Activated CD8-positive, alpha-beta T cell treated with anti-CD3 and anti-CD28 coated beads for 36 hours (primary cell): ENCODE measurements at regions of chr13 and their contacts with region 1.

Region 1: GRCh38 chr13:26985285-26985878 is 186.2 kb downstream of the USP12 start:
- DNase-seq: peak; percentile 86
- ATAC-seq: peak; percentile 90
- H3K4me3 Mint-ChIP-seq: no peak overlapping the region
- H3K27ac Mint-ChIP-seq: no peak overlapping the region
- H3K4me1 Mint-ChIP-seq: no peaks in the 10 kb centered on the region
- H3K27me3 Mint-ChIP-seq: peaks cover 11% of the 10 kb centered on the region
- CTCF ChIP-seq: peak; percentile 76

Region 2: GRCh38 chr13:26971990-26972887 is 13.1 kb before region 1 on chr13:
- CTCF ChIA-PET with region 1: interaction called, 15 read pairs
- POLR2A ChIA-PET with region 1: no interaction called
- intact Hi-C with region 1: no loop called
- DNase-seq: peak; percentile 59
- ATAC-seq: peak; percentile 80
- H3K4me3 Mint-ChIP-seq: no peak overlapping the region
- H3K27ac Mint-ChIP-seq: peak overlapping the region; percentile 25
- H3K4me1 Mint-ChIP-seq: peaks cover 4% of the 10 kb centered on the region
- H3K27me3 Mint-ChIP-seq: no peaks in the 10 kb centered on the region
- CTCF ChIP-seq: no peak

Region 3: GRCh38 chr13:27270594-27271520 is 285.5 kb after region 1 on chr13 and contains the start of gene RASL11A:
- CTCF ChIA-PET with region 1: interaction called, 22 read pairs
- POLR2A ChIA-PET with region 1: no interaction called
- intact Hi-C with region 1: no loop called
- DNase-seq: peak; percentile 64
- ATAC-seq: peak; percentile 91
- H3K4me3 Mint-ChIP-seq: peak within 1 kb of the TSS; percentile 77
- H3K27ac Mint-ChIP-seq: no peak within 1 kb of the TSS
- H3K4me1 Mint-ChIP-seq: peaks cover 6% of the 10 kb centered on the region
- H3K27me3 Mint-ChIP-seq: no peaks in the 10 kb centered on the region
- CTCF ChIP-seq: peak; percentile 100
- total RNA-seq, gene RASL11A: 2.7 to 3.1 TPM

Region 4: DNA sequence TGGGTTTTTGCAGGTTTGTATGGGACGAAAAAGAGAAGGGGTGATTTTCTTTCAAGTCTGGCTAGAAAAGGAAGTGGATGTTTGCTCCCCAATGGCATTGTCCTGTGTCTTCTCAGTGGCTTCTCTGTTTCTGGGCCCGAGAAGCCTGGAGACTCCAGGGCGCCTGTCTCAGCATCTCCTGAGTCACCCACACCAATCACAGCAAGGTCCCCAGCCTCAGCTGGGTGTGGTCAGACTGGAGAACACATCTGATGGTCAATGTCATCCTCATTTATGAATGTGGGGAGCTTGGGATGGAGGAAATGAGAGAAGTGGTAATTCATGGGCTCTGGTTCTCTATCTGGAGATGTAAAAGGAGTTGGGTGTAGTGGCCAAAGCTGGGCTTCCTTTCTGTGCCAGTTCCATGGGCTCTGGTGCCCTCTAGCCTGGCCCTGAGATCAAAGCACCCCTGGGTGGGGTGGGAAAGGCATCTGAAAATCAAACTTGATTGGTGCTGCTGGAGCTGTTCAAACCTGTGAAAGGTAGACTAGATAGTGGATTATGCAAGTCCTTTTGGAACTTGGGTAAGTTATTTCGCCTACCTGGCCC is 298.6 kb after region 1 on chr13:
- CTCF ChIA-PET with region 1: interaction called, 19 read pairs
- POLR2A ChIA-PET with region 1: no interaction called
- intact Hi-C with region 1: no loop called
- DNase-seq: peak; percentile 45
- ATAC-seq: peak; percentile 69
- H3K4me3 Mint-ChIP-seq: no peak overlapping the region
- H3K27ac Mint-ChIP-seq: no peak overlapping the region
- H3K4me1 Mint-ChIP-seq: no peaks in the 10 kb centered on the region
- H3K27me3 Mint-ChIP-seq: no peaks in the 10 kb centered on the region
- CTCF ChIP-seq: no peak

Region 5: GRCh38 chr13:27353166-27353583 is 367.8 kb after region 1 on chr13:
- CTCF ChIA-PET with region 1: interaction called, 151 read pairs
- POLR2A ChIA-PET with region 1: interaction called, 5 read pairs
- intact Hi-C with region 1: no loop called
- DNase-seq: peak; percentile 55
- ATAC-seq: peak; percentile 91
- H3K4me3 Mint-ChIP-seq: no peak overlapping the region
- H3K27ac Mint-ChIP-seq: no peak overlapping the region
- H3K4me1 Mint-ChIP-seq: peaks cover 10% of the 10 kb centered on the region
- H3K27me3 Mint-ChIP-seq: no peaks in the 10 kb centered on the region
- CTCF ChIP-seq: no peak